OCI-LY7 (cell line): ENCODE measurements at regions of chr1 and their contacts with region 1.

Region 1: GRCh38 chr1:27772933-27773825 is at the start of gene STX12:
- DNase-seq: peak; percentile 98
- H3K4me3 ChIP-seq: peak within 1 kb of the TSS; percentile 95
- H3K27ac ChIP-seq: peak within 1 kb of the TSS; percentile 58
- H3K4me1 ChIP-seq: peaks cover 24% of the 10 kb centered on the region
- CTCF ChIP-seq: no peak
- total RNA-seq, gene STX12: 17.2 and 19.8 TPM in 2 replicates

Region 2: GRCh38 chr1:27689423-27690173 is 83.6 kb before region 1 on chr1:
- CTCF ChIA-PET with region 1: no interaction called
- POLR2A ChIA-PET with region 1: no interaction called
- intact Hi-C with region 1: no loop called
- DNase-seq: no peak
- H3K4me3 ChIP-seq: no peak overlapping the region
- H3K27ac ChIP-seq: no peak overlapping the region
- H3K4me1 ChIP-seq: no peaks in the 10 kb centered on the region
- CTCF ChIP-seq: no peak

Region 3: DNA sequence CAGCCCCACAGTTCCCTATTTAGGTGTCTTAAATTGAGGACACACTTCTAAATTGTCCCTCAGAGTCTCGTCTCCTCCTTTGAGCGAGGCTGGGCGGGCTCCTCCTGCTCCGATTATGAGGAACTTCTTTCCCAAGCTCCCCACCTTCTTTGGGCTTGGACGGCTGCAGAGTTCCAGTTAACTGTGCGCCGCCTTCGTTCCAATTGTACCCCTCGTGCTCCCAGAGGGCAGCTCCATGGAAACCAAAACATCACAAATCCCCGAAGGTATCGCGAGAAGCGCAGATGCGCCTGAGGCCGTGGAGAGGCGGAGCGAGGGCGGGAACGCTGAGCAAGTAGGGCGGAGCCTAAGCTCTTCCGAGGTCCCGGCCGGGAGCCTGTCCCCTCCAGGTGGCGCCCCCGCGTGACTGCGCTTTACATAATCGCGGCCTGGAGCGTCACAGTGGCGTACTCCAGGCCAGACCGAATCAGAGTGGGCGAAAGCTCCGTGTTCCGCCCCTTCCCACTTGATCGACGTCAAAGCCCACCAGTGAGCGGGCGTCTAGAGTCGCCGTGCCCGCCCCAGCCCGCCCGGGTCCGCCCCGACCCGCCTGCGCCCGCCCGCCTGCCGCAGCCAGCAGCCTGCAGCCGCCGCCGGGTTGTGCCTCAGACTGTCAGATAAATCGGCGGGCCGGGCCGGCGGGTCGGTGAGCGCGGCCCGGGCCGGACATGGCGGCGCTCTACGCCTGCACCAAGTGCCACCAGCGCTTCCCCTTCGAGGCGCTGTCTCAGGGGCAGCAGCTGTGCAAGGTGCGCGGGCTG is 47.6 kb before region 1 on chr1 and contains the start of gene FAM76A:
- CTCF ChIA-PET with region 1: interaction called, 6 read pairs
- POLR2A ChIA-PET with region 1: interaction called, 7 read pairs
- intact Hi-C with region 1: loop called (anchors 5 kb)
- DNase-seq: peak; percentile 100
- H3K4me3 ChIP-seq: peak within 1 kb of the TSS; percentile 85
- H3K27ac ChIP-seq: peak within 1 kb of the TSS; percentile 45
- H3K4me1 ChIP-seq: peaks cover 19% of the 10 kb centered on the region
- CTCF ChIP-seq: peak; percentile 74
- total RNA-seq, gene FAM76A: 18.6 and 24.6 TPM in 2 replicates

Region 4: DNA sequence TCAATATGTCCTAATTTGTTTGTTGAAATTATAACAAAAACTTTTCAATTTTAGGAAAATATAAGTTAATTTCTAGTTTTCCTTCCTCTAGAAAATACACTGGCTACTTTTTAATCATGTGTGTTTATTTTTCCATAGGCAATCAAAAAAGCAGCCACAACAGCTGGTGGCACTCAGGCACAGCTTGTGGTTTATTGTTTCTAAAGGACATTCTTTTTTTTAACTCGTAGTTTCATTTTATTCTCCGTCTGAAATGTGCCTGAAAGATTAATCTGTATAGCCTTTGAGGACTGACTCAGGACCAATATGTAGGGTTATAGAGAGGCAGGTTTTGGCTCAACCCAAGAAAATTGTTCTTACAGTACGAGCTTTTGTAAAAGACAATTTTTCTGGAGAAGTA is 20.8 kb before region 1 on chr1:
- CTCF ChIA-PET with region 1: interaction called, 3 read pairs
- POLR2A ChIA-PET with region 1: interaction called, 10 read pairs
- intact Hi-C with region 1: no loop called
- DNase-seq: peak; percentile 14
- H3K4me3 ChIP-seq: no peak overlapping the region
- H3K27ac ChIP-seq: no peak overlapping the region
- H3K4me1 ChIP-seq: peaks cover 7% of the 10 kb centered on the region
- CTCF ChIP-seq: no peak

Region 5: GRCh38 chr1:27785781-27786455 is 12.7 kb after region 1 on chr1:
- CTCF ChIA-PET with region 1: interaction called, 4 read pairs
- POLR2A ChIA-PET with region 1: interaction called, 10 read pairs
- intact Hi-C with region 1: no loop called
- DNase-seq: no peak
- H3K4me3 ChIP-seq: no peak overlapping the region
- H3K27ac ChIP-seq: no peak overlapping the region
- H3K4me1 ChIP-seq: no peaks in the 10 kb centered on the region
- CTCF ChIP-seq: no peak

Region 6: DNA sequence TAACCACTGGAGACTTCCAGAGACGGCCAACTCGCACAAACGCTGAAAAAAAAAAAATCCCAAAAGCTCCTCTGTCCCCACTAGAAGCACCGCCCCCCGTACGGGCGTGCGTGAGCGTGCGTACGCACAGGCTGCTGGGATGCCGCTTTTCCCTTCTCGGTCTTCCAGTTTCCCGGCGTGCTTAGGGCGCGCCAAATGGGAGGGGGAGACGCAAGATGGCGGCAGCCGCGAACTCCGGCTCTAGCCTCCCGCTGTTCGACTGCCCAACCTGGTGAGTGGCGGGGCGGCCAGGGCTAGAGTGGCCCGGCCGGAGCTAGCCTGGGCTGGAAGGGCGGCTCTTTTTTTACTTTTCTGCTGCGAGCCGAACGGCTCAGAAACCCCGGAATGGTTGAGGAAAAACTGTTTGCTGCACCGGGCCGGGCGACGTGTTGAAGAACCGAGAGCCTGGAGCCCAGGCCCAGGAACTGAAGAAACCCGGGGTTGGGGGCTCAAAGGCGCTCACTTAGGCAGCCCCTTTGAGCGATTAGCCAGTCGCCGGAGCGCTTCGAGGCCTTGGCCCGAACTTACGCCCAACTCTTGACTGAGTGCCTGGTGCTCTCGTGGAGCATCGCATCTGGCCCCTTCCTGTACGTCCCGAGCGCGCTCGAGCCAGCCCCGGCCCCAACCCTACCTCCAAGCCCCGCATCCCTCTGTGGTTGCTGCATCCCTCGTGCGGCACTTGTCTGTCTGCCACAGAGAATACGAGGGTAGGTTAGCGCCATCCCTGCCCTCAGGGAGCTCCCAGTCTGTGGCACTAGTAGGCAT is 57.6 kb after region 1 on chr1 and contains the start of gene PPP1R8:
- CTCF ChIA-PET with region 1: no interaction called
- POLR2A ChIA-PET with region 1: interaction called, 13 read pairs
- intact Hi-C with region 1: no loop called
- DNase-seq: peak; percentile 97
- H3K4me3 ChIP-seq: peak within 1 kb of the TSS; percentile 92
- H3K27ac ChIP-seq: peak within 1 kb of the TSS; percentile 60
- H3K4me1 ChIP-seq: peaks cover 23% of the 10 kb centered on the region
- CTCF ChIP-seq: no peak
- total RNA-seq, gene PPP1R8: 71.3 and 72.4 TPM in 2 replicates